Posterior vena cava (tissue), 2 donors: ENCODE measurements at regions of chr9 and their contacts with region 1.

Region 1: DNA sequence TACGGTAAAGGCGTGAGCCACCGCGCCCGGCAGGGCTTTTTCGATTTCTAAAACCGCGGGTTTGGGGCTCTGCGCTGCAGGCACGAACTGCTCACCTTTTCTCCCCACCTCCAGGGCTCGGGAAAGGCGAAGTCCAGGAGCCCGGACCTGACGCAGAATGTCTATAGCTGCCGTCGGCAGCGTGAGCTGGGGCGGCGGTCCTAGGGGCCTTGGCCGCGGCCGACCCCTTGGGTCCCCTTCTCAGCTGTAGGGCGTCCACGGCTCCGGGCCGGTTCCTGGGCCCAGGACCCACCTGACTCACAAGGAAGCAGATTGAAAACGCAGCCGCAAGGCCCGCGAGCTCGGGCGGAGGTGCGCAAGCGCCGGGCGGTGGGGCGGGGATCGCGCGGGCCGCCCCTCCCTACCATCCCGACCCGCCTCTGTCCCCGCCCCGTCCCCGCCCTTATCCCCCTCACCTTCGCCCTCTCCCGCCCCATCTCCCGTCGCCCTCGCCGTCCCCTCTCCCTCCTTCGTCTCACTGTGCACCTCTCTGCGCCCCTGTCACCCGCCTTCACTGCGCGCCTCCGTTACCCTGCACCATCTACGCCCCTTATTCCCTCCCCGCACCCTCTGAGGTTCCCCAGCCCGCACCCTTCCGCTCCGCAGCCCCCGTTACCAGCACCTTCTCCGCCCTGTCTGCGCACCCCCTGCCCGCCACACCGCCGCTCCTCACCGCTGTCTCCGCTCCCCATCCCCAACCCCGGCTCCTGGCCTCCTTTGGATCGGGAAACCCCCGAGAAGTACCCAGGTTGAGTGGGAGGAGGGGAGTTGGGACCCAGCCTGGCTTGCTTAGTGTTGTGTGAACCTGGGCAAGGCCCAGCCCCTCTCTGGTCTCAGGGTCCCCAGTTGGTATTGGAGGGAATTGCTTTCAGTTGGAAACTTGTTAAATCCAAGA is at the start of gene HDHD3:
- DNase-seq: peak; percentile 93
- total RNA-seq, gene HDHD3: 7.6 to 10.6 TPM

Region 2: DNA sequence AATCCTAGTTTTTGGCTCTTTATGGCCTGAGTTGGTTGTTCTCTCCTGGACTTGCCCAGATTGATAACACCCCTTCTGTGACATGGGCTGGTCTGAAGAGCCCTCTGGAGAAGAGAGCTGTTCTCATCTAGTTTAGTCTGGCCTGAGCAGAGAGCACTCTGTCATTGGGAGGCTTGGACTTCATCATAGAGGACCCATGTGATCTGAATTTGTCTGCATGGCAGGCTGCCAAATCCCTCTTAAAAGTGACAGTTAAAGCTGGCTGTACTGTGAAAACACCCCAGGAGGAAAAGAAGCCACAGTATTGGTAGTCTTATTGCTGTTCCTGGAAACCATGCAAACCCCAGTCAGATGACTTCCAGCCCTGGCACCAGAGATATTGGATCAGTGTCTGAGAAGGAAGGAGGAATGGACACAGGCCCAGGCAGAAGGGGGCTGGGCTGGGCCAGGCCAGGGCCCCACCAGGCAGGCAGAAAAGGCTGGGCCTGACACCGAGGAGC is 33.1 kb before region 1 on chr9:
- intact Hi-C with region 1: loop called in 1 of 2 experiments (anchors 2 kb)
- DNase-seq: peak; percentile 92

Region 3: DNA sequence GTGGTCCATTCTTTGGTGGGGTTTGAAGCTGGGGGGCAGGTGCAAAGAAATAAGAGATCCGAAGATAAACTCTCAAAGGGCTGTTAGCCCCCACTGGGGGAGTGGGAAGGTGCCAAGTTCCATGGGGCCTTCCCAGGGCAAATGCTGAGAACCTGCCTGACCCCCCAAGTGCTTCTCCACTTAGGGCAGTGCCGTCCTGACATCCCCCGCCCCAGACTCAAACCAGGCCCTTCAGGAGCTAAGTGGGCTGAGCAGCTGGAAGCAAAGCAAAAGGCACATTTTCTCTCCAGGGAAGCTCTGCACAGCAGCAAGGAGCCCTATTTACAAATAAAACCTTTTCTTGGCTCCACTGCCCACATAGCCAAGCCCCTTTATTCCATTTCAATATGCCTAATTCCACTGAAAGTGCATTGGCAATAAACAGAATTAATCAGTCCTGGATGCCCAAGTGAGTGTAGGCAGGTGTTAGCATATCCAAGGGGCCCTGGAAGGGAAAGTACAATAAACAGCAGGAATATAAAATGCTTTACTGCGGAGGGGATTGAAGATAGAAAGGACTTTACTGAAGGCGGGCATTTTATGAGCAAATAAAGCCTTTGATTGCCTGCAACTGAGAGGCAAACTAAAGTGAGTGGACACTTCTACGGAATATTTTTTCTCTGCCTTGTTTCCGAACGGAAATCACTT is 1083.8 kb after region 1 on chr9:
- intact Hi-C with region 1: loop called in 1 of 2 experiments (anchors 5 kb)
- DNase-seq: no peak